Heart right ventricle (tissue), 16 donors: ENCODE measurements at regions of chr5 and their contacts with region 1.

Region 1: GRCh38 chr5:41264019-41264418 is 50.7 kb upstream of the C6 start:
- DNase-seq: no peak
- ATAC-seq: peak; percentile 62 to 84 (median 81)
- H3K4me3 ChIP-seq: no peak overlapping the region
- H3K27ac ChIP-seq: peak overlapping the region in 8 of 10 donors; percentile 27 to 71 (median 50)
- H3K4me1 ChIP-seq: peaks cover 5 to 30% (median 15%) of the 10 kb centered on the region in 9 donors
- H3K27me3 ChIP-seq: no peaks in the 10 kb centered on the region
- CTCF ChIP-seq: no peak

Region 2: GRCh38 chr5:40736103-40736875 is 527.7 kb before region 1 on chr5:
- intact Hi-C with region 1: no loop called
- DNase-seq: no peak
- ATAC-seq: peak in 5 of 8 donors; percentile 64 to 75 (median 71)
- H3K4me3 ChIP-seq: no peak overlapping the region
- H3K27ac ChIP-seq: no peak overlapping the region
- H3K4me1 ChIP-seq: peaks cover 6 to 37% (median 31%) of the 10 kb centered on the region in 9 donors
- H3K27me3 ChIP-seq: no peaks in the 10 kb centered on the region
- CTCF ChIP-seq: peak; percentile 61 to 88 (median 78)

Region 3: GRCh38 chr5:40914835-40915234 is 349.2 kb before region 1 on chr5:
- intact Hi-C with region 1: loop called in 1 of 10 experiments (anchors 10 kb)
- DNase-seq: no peak
- ATAC-seq: peak in 6 of 8 donors; percentile 38 to 77 (median 54)
- H3K4me3 ChIP-seq: peak overlapping the region in 8 of 10 donors; percentile 2 to 41 (median 28)
- H3K27ac ChIP-seq: peak overlapping the region in 8 of 10 donors; percentile 6 to 65 (median 37)
- H3K4me1 ChIP-seq: peaks cover 0 to 46% (median 9%) of the 10 kb centered on the region in 9 donors
- H3K27me3 ChIP-seq: no peaks in the 10 kb centered on the region
- CTCF ChIP-seq: no peak

Region 4: DNA sequence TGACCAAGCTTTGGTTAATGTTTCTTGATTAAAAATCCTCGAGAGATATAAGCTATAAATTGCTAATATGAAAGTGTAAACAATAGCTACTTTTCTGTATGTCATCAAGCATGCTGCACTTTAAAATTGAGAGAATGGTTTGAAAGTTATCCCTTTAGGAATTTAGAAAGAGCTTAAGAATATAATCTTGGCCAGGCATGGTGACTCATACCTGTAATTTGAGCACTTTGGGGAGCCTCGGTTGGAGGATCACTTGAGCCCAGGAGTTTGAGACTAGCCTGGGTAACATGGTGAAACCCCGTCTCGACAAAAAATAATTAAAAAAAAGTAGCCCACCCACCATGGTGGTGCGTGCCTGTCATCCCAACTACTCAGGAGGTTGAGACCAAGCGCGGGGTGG is 180.7 kb before region 1 on chr5:
- intact Hi-C with region 1: no loop called
- DNase-seq: no peak
- ATAC-seq: no peak
- H3K4me3 ChIP-seq: no peak overlapping the region
- H3K27ac ChIP-seq: no peak overlapping the region
- H3K4me1 ChIP-seq: peaks cover 0 to 9% (median 0%) of the 10 kb centered on the region in 9 donors
- H3K27me3 ChIP-seq: no peaks in the 10 kb centered on the region
- CTCF ChIP-seq: no peak

Region 5: GRCh38 chr5:41334758-41335157 is 70.7 kb after region 1 on chr5:
- intact Hi-C with region 1: loop called in 1 of 10 experiments (anchors 5 kb)
- DNase-seq: peak in 1 of 2 donors; percentile 13
- ATAC-seq: peak in 7 of 8 donors; percentile 44 to 80 (median 74)
- H3K4me3 ChIP-seq: no peak overlapping the region
- H3K27ac ChIP-seq: peak overlapping the region; percentile 1 to 74 (median 51)
- H3K4me1 ChIP-seq: peaks cover 7 to 49% (median 31%) of the 10 kb centered on the region in 9 donors
- H3K27me3 ChIP-seq: no peaks in the 10 kb centered on the region
- CTCF ChIP-seq: no peak

Region 6: GRCh38 chr5:41636605-41637004 is 372.6 kb after region 1 on chr5:
- intact Hi-C with region 1: loop called in 1 of 10 experiments (anchors 10 kb)
- DNase-seq: no peak
- ATAC-seq: no peak
- H3K4me3 ChIP-seq: no peak overlapping the region
- H3K27ac ChIP-seq: no peak overlapping the region
- H3K4me1 ChIP-seq: no peaks in the 10 kb centered on the region
- H3K27me3 ChIP-seq: no peaks in the 10 kb centered on the region
- CTCF ChIP-seq: peak in 4 of 9 donors; percentile 15 to 40 (median 20)

Region 7: DNA sequence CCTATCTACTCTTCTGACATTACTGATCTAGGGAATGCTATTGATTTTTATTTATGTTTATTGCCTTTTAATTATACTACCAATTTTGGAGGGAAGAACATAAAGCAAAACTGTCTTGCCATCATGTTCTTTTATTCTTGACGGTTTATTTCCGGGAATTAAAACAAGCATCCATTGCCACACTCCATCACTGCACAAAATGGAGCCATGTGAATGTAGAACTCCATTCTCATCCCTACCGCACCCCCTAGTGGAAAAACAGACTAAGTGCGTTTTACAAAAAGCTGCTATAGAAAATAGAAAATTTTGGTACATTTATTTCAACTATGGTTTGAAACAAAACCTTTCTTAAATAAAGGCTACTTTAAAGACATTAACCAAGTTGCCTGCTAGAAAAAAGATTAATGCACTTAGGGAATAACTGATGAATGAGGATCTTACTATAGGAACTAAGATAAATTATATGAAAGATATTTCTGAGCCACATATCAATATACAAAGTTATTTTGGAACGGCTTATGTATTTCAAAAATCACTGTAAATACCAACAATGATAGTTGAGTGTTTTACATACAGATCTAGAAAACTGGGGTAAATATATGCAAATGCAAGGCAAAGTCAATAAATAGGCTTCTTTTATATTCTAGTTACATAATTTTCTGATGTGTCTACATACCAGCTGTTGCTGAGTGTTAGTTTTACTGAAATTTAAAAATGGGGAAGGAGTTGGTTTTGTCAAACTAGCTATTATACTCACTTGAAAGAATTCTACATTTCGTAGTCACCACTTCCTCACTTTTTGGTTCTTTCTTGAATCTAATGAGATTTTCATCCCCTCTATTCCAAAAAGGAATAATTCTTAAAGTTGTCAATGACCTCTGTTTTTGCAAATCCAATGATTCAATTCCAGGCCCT is 579.7 kb after region 1 on chr5:
- intact Hi-C with region 1: loop called in 1 of 10 experiments (anchors 5 kb)
- DNase-seq: peak in 1 of 2 donors; percentile 51
- ATAC-seq: peak in 6 of 8 donors; percentile 49 to 77 (median 70)
- H3K4me3 ChIP-seq: no peak overlapping the region
- H3K27ac ChIP-seq: no peak overlapping the region
- H3K4me1 ChIP-seq: peaks cover 0 to 11% (median 0%) of the 10 kb centered on the region in 9 donors
- H3K27me3 ChIP-seq: no peaks in the 10 kb centered on the region
- CTCF ChIP-seq: peak; percentile 56 to 87 (median 79)